MCF 10A (cell line): ENCODE measurements at regions of chr9 and their contacts with region 1.

Region 1: GRCh38 chr9:6757456-6758247 is at the start of gene KDM4C:
- DNase-seq: peak; percentile 95
- H3K4me3 Mint-ChIP-seq: peak within 1 kb of the TSS; percentile 90
- H3K27ac Mint-ChIP-seq: peak within 1 kb of the TSS; percentile 100
- H3K4me1 Mint-ChIP-seq: peaks cover 3% of the 10 kb centered on the region
- H3K27me3 Mint-ChIP-seq: no peaks in the 10 kb centered on the region
- CTCF ChIP-seq: no peak
- total RNA-seq, gene KDM4C: 28.6 and 29.5 TPM in 2 replicates

Region 2: GRCh38 chr9:6412487-6413364 is 344.9 kb before region 1 on chr9 and contains the start of gene UHRF2:
- CTCF ChIA-PET with region 1: no interaction called
- POLR2A ChIA-PET with region 1: interaction called, 24 read pairs
- intact Hi-C with region 1: no loop called
- DNase-seq: peak; percentile 98
- H3K4me3 Mint-ChIP-seq: peak within 1 kb of the TSS; percentile 81
- H3K27ac Mint-ChIP-seq: peak within 1 kb of the TSS; percentile 87
- H3K4me1 Mint-ChIP-seq: peaks cover 19% of the 10 kb centered on the region
- H3K27me3 Mint-ChIP-seq: no peaks in the 10 kb centered on the region
- CTCF ChIP-seq: no peak
- total RNA-seq, gene UHRF2: 54.6 and 58.3 TPM in 2 replicates

Region 3: DNA sequence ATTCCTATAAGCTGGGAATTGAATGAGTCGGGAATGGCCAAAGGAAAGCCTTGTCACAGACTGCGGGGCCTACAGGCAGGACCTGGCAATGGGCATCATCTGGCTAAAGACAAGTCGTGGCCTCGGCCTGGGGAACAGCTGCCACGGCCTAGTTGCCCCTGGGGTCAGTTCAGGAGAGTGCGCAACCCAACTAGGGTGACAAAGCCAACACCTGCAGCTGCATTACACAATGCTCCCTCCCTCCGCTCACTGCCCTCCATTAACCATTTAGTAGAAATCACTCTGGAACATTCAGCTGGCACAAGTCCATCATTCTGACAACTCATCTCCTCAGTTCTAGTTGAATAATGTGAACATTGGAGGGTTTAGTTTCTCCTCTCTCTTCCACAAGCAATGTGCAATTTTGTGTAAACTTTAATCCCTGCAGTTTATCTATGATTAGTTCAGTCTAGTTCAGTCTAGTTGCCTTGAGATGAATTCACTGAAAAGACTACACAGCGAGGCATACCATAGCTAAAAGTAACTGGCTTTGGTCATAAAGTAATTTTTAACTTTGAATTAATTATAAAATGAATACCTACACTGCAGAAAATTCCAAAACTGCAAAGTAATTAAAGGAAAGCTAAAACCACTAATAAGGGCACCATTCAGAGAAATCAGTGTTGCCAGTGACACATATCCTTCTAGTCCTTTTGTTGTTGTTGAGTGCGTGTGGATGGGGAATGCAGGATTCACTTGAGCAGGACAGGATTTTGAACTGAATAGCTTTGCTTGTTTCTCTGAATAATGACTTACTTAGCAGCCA is 117.2 kb before region 1 on chr9:
- CTCF ChIA-PET with region 1: no interaction called
- POLR2A ChIA-PET with region 1: interaction called, 11 read pairs
- intact Hi-C with region 1: no loop called
- DNase-seq: peak; percentile 76
- H3K4me3 Mint-ChIP-seq: no peak overlapping the region
- H3K27ac Mint-ChIP-seq: peak overlapping the region; percentile 77
- H3K4me1 Mint-ChIP-seq: peaks cover 9% of the 10 kb centered on the region
- H3K27me3 Mint-ChIP-seq: no peaks in the 10 kb centered on the region
- CTCF ChIP-seq: no peak

Region 4: GRCh38 chr9:6655036-6655435 is 102.6 kb before region 1 on chr9:
- CTCF ChIA-PET with region 1: no interaction called
- POLR2A ChIA-PET with region 1: no interaction called
- intact Hi-C with region 1: no loop called
- DNase-seq: no peak
- H3K4me3 Mint-ChIP-seq: no peak overlapping the region
- H3K27ac Mint-ChIP-seq: no peak overlapping the region
- H3K4me1 Mint-ChIP-seq: no peaks in the 10 kb centered on the region
- H3K27me3 Mint-ChIP-seq: no peaks in the 10 kb centered on the region
- CTCF ChIP-seq: no peak

Region 5: GRCh38 chr9:6739218-6739617 is 18.4 kb before region 1 on chr9:
- CTCF ChIA-PET with region 1: interaction called, 3 read pairs
- POLR2A ChIA-PET with region 1: interaction called, 10 read pairs
- intact Hi-C with region 1: no loop called
- DNase-seq: peak; percentile 41
- H3K4me3 Mint-ChIP-seq: no peak overlapping the region
- H3K27ac Mint-ChIP-seq: no peak overlapping the region
- H3K4me1 Mint-ChIP-seq: no peaks in the 10 kb centered on the region
- H3K27me3 Mint-ChIP-seq: no peaks in the 10 kb centered on the region
- CTCF ChIP-seq: peak; percentile 32

Region 6: DNA sequence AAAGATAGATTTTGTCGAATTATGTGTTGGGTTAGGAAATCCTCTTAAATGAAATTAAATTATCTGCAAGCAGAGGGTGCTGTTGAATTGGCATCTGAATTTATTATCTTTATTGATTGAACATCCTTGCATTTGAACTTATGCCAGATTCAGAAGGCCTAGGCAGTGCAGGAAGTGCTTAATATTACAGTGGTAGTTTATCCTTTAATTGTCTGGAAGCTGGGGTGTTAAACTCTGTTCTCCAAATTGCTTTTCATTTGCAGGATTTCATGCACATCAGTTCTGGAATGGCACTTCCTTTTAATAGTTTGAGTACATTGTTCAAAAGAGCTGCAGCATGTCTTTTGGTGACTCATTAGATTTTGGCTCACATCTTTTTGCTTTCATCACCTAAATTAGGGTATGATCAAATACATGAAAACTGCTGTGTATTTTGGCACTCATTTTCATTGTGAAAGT is 186.5 kb after region 1 on chr9:
- CTCF ChIA-PET with region 1: no interaction called
- POLR2A ChIA-PET with region 1: interaction called, 15 read pairs
- intact Hi-C with region 1: no loop called
- DNase-seq: peak; percentile 85
- H3K4me3 Mint-ChIP-seq: no peak overlapping the region
- H3K27ac Mint-ChIP-seq: no peak overlapping the region
- H3K4me1 Mint-ChIP-seq: peaks cover 14% of the 10 kb centered on the region
- H3K27me3 Mint-ChIP-seq: no peaks in the 10 kb centered on the region
- CTCF ChIP-seq: no peak